Activated CD4-positive, alpha-beta memory T cell treated with anti-CD3 and anti-CD28 coated beads for 36 hours (primary cell): ENCODE measurements at regions of chr16 and their contacts with region 1.

Region 1: DNA sequence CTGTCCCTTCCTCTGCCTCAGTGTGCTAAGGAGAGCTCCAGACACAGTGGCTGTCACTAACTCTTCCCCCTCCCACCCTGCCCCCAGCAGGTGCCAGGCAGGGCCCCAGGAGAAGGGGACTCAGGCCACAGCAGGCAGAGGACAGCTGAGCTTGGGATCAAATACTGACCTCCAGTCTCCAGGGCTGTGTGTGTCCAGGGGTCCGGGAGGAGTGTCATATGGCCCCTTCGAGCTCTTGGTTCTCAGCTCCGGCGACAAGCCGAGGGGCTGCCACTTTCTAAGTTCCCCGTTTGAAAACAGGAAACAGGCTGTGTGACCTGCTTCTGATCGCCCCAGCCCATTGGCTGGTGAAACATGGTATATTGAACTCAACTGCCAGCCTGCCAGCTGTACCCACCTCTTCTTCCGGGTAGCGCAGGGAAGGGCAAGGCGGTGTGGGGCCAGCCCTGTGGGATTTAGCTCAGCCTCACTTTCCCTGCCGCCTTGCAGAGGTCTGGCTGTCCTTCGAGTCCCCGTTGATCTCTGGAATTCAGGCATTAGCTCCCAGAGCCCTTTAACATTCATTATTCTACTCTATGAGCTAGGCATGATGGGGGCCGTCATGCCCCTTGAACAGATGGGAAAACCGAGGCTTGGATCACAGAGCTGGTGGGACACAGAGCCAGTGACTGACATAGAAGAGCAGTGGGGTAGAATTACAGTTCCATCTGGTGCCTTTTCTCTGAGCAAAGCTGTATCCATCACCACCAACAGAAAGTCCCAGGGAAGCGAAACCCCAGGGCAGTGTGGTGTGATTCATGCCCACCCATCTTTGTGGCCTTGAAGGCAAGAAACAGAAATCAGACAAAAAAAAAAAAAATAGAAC is at the start of gene SNX20:
- DNase-seq: peak; percentile 79
- H3K4me3 Mint-ChIP-seq: peak within 1 kb of the TSS; percentile 89
- H3K27ac Mint-ChIP-seq: peak within 1 kb of the TSS; percentile 91
- H3K4me1 Mint-ChIP-seq: peaks cover 85% of the 10 kb centered on the region
- H3K27me3 Mint-ChIP-seq: no peaks in the 10 kb centered on the region
- total RNA-seq, gene SNX20: 55.4 to 56.9 TPM

Region 2: GRCh38 chr16:50657241-50657640 is 24.0 kb before region 1 on chr16:
- CTCF ChIA-PET with region 1: no interaction called
- POLR2A ChIA-PET with region 1: no interaction called
- intact Hi-C with region 1: no loop called
- DNase-seq: no peak
- H3K4me3 Mint-ChIP-seq: no peak overlapping the region
- H3K27ac Mint-ChIP-seq: no peak overlapping the region
- H3K4me1 Mint-ChIP-seq: no peaks in the 10 kb centered on the region
- H3K27me3 Mint-ChIP-seq: no peaks in the 10 kb centered on the region

Region 3: DNA sequence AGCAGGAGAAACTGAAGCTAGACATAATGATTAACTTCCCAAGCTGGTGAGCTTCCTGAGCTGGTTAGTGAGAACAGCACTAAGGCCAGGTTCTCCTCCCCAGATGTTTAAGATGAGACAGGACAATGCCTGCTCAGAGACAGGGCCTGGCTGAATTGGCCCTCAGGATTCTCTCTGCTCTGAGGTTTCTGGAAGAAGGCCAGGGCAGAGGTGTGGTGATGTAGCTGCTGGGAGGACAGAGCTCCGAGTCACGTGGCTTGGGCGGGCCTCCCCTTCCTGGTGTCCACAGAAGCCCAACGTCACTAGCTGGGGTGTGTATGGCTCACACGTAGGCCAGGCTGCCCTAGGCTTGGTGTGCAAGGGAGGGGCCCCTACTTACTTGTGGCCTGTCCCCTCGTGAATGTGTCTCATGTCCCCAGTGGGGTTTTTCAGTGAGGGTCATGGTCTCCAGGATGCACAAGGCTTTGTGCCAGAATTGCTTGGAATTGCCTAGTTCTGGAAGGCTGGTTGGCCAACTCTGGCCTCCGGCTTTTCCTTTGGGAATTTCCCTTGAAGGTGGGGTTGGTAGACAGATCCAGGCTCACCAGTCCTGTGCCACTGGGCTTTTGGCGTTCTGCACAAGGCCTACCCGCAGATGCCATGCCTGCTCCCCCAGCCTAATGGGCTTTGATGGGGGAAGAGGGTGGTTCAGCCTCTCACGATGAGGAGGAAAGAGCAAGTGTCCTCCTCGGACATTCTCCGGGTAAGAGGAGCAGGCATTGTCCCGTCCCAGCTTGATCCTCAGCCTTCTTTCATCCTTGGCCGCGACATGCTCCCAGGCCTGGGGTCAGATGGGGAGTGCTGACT is 15.5 kb after region 1 on chr16:
- CTCF ChIA-PET with region 1: interaction called, 15 read pairs
- POLR2A ChIA-PET with region 1: interaction called, 123 read pairs
- intact Hi-C with region 1: loop called (anchors 1 kb)
- DNase-seq: peak; percentile 90
- H3K4me3 Mint-ChIP-seq: peak overlapping the region; percentile 78
- H3K27ac Mint-ChIP-seq: peak overlapping the region; percentile 98
- H3K4me1 Mint-ChIP-seq: peaks cover 89% of the 10 kb centered on the region
- H3K27me3 Mint-ChIP-seq: no peaks in the 10 kb centered on the region

Region 4: GRCh38 chr16:50709053-50709684 is 27.9 kb after region 1 on chr16:
- CTCF ChIA-PET with region 1: interaction called, 7 read pairs
- POLR2A ChIA-PET with region 1: interaction called, 16 read pairs
- intact Hi-C with region 1: no loop called
- DNase-seq: peak; percentile 34
- H3K4me3 Mint-ChIP-seq: peak overlapping the region; percentile 24
- H3K27ac Mint-ChIP-seq: peak overlapping the region; percentile 94
- H3K4me1 Mint-ChIP-seq: peaks cover 61% of the 10 kb centered on the region
- H3K27me3 Mint-ChIP-seq: no peaks in the 10 kb centered on the region